ENCODE measurements at regions of chr1 and their contacts with region 1.

Region 1: GRCh38 chr1:20151906-20152598 is 12.9 kb downstream of the PLA2G2F start:
- DNase-seq: peak; percentile 50
- H3K4me3 ChIP-seq: peak overlapping the region; percentile 25 to 57 (median 35)
- H3K27ac ChIP-seq: no peak overlapping the region
- H3K4me1 ChIP-seq: peaks cover 6% of the 10 kb centered on the region
- H3K27me3 ChIP-seq: no peaks in the 10 kb centered on the region
- CTCF ChIP-seq: peak; percentile 79 to 89

Region 2: DNA sequence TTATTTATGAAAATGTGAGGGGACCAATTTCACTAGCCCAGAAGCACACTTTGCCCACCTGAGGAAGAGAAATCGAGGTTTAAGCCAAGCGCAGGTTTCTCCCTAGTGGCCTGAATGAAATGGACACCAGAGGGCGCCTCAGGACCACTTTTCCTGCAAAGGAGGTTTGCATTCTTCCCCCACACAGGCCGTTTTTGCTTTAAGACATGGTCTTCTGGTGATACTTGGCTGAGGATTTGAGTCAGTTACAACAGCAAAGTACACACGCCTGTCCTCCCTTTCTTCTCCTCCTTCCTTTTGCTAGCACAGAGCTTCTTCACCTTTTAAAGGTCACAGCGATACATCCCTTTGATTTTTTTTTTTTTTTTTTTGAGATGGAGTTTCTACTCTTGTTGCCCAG is 234.0 kb before region 1 on chr1:
- CTCF ChIA-PET with region 1: interaction called, 4 read pairs
- dilution Hi-C with region 1: no loop called
- in situ Hi-C with region 1: loop called (anchors 5 to 25 kb)
- intact Hi-C with region 1: loop called (anchors 1 kb)
- DNase-seq: peak; percentile 60
- H3K4me3 ChIP-seq: no peak overlapping the region
- H3K27ac ChIP-seq: no peak overlapping the region
- H3K4me1 ChIP-seq: no peaks in the 10 kb centered on the region
- H3K27me3 ChIP-seq: no peaks in the 10 kb centered on the region
- CTCF ChIP-seq: peak; percentile 90 to 95

Region 3: GRCh38 chr1:20093940-20094391 is 58.1 kb before region 1 on chr1:
- CTCF ChIA-PET with region 1: no interaction called
- dilution Hi-C with region 1: loop called (anchors 10 kb)
- in situ Hi-C with region 1: loop called in 1 of 2 experiments (anchors 5 kb)
- intact Hi-C with region 1: no loop called
- DNase-seq: no peak
- H3K4me3 ChIP-seq: no peak overlapping the region
- H3K27ac ChIP-seq: no peak overlapping the region
- H3K4me1 ChIP-seq: no peaks in the 10 kb centered on the region
- H3K27me3 ChIP-seq: no peaks in the 10 kb centered on the region
- CTCF ChIP-seq: no peak

Region 4: GRCh38 chr1:20110679-20111078 is 41.4 kb before region 1 on chr1:
- CTCF ChIA-PET with region 1: interaction called, 7 read pairs
- dilution Hi-C with region 1: loop called (anchors 5 kb)
- in situ Hi-C with region 1: loop called in 1 of 2 experiments (anchors 10 kb)
- intact Hi-C with region 1: no loop called
- DNase-seq: peak; percentile 98
- H3K4me3 ChIP-seq: no peak overlapping the region
- H3K27ac ChIP-seq: peak overlapping the region; percentile 75
- H3K4me1 ChIP-seq: peaks cover 22% of the 10 kb centered on the region
- H3K27me3 ChIP-seq: no peaks in the 10 kb centered on the region
- CTCF ChIP-seq: no peak